Activated CD4-positive, alpha-beta T cell treated with anti-CD3 and anti-CD28 coated beads for 36 hours (primary cell): ENCODE measurements at regions of chr3 and their contacts with region 1.

Region 1: GRCh38 chr3:49411968-49412631 is at the starts of genes RHOA and TCTA:
- DNase-seq: peak; percentile 99
- ATAC-seq: peak; percentile 88
- H3K4me3 Mint-ChIP-seq: peak within 1 kb of the TSS; percentile 97
- H3K27ac Mint-ChIP-seq: peak within 1 kb of the TSS; percentile 97
- H3K4me1 Mint-ChIP-seq: peaks cover 63% of the 10 kb centered on the region
- H3K27me3 Mint-ChIP-seq: no peaks in the 10 kb centered on the region
- total RNA-seq, gene RHOA: 438 to 449 TPM
- total RNA-seq, gene TCTA: 9.4 TPM

Region 2: GRCh38 chr3:49007068-49007770 is 404.9 kb before region 1 on chr3 and contains the start of gene WDR6:
- CTCF ChIA-PET with region 1: no interaction called
- POLR2A ChIA-PET with region 1: interaction called, 4 read pairs
- intact Hi-C with region 1: loop called in 1 of 2 experiments (anchors 5 kb)
- DNase-seq: peak; percentile 99
- ATAC-seq: peak; percentile 90
- H3K4me3 Mint-ChIP-seq: peak within 1 kb of the TSS; percentile 100
- H3K27ac Mint-ChIP-seq: peak within 1 kb of the TSS; percentile 100
- H3K4me1 Mint-ChIP-seq: peaks cover 16% of the 10 kb centered on the region
- H3K27me3 Mint-ChIP-seq: no peaks in the 10 kb centered on the region
- total RNA-seq, gene WDR6: 109 to 127 TPM

Region 3: GRCh38 chr3:49104483-49105291 is 307.4 kb before region 1 on chr3 and contains the start of gene QARS1:
- CTCF ChIA-PET with region 1: no interaction called
- POLR2A ChIA-PET with region 1: no interaction called
- intact Hi-C with region 1: loop called in 1 of 2 experiments (anchors 1 kb)
- DNase-seq: peak; percentile 94
- ATAC-seq: peak; percentile 100
- H3K4me3 Mint-ChIP-seq: peak within 1 kb of the TSS; percentile 96
- H3K27ac Mint-ChIP-seq: peak within 1 kb of the TSS; percentile 96
- H3K4me1 Mint-ChIP-seq: peaks cover 21% of the 10 kb centered on the region
- H3K27me3 Mint-ChIP-seq: no peaks in the 10 kb centered on the region
- total RNA-seq, gene QARS1: 240 to 342 TPM

Region 4: GRCh38 chr3:49339945-49340800 is 71.9 kb before region 1 on chr3 and contains the start of gene USP4:
- CTCF ChIA-PET with region 1: interaction called, 12 read pairs
- POLR2A ChIA-PET with region 1: interaction called, 17 read pairs
- intact Hi-C with region 1: loop called (anchors 1 kb)
- DNase-seq: peak; percentile 97
- ATAC-seq: peak; percentile 89
- H3K4me3 Mint-ChIP-seq: peak within 1 kb of the TSS; percentile 99
- H3K27ac Mint-ChIP-seq: peak within 1 kb of the TSS; percentile 96
- H3K4me1 Mint-ChIP-seq: peaks cover 49% of the 10 kb centered on the region
- H3K27me3 Mint-ChIP-seq: no peaks in the 10 kb centered on the region
- total RNA-seq, gene USP4: 69.3 to 71.8 TPM

Region 5: DNA sequence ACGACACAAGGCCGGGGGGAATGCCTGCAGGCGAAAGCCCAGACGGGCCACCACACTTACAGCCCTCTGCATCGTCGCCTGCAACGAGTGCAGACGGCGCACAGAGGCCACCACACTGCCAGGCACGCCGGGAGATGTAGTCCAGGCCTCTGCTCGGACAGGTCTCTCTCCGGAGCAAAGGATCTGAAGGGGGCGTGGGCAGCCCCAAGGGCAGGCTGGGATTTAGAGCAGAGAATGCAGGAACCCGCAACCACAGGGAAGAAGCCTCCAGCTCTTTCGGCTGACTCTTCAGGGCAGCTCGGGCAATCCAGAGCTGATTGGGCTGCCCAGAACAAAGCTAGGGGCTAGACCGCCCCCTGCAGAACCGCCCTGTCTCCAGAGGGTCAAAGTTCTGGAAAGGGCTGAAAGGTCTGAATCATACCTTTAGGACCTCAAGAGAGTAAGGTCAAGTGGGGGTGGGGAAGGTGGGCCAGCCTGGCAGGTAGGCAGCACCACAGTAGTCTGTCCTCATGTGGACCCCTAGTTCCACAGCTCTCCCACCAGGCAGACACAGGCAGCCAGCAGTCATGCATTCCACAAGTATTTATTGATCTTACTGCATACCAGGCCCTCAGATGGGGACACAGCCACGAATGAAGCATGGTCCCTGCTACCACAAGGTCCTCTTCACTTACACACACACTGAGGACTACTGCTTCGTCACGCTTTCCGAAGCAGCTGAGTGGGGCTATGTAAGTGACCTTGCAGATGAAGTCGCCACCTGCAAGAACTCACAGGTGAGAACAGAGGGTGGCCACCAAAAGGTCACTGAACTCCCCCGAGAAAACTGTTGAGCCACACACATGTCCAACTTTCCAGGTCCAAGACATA is 10.5 kb after region 1 on chr3 and contains the start of gene AMT:
- CTCF ChIA-PET with region 1: interaction called, 11 read pairs
- POLR2A ChIA-PET with region 1: interaction called, 10 read pairs
- intact Hi-C with region 1: no loop called
- DNase-seq: no peak
- ATAC-seq: no peak
- H3K4me3 Mint-ChIP-seq: no peak within 1 kb of the TSS
- H3K27ac Mint-ChIP-seq: peak within 1 kb of the TSS; percentile 31
- H3K4me1 Mint-ChIP-seq: peaks cover 39% of the 10 kb centered on the region
- H3K27me3 Mint-ChIP-seq: no peaks in the 10 kb centered on the region
- total RNA-seq, gene AMT: 3.6 to 4.1 TPM

Region 6: DNA sequence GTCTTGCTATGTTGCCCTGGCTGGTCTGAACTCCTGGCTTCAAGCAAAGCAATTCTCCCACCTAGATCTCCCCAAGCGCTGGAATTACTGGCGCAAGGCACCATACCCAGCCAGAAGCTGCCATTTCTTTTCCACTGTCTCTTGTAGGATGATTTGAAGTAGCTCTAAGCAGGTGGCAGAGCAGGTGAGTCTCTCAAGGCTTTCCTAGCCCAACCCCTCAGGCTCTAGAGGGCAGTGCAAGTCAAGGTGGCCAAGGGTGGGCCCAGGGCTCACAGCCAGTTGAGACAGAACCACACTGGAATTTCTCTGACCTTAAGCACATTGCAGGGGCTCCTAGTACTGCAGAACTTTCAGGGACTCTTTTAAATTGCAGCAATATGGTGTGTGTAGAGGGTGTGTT is 42.4 kb after region 1 on chr3:
- CTCF ChIA-PET with region 1: interaction called, 37 read pairs
- POLR2A ChIA-PET with region 1: interaction called, 6 read pairs
- intact Hi-C with region 1: loop called (anchors 1 kb)
- DNase-seq: no peak
- ATAC-seq: no peak
- H3K4me3 Mint-ChIP-seq: no peak overlapping the region
- H3K27ac Mint-ChIP-seq: no peak overlapping the region
- H3K4me1 Mint-ChIP-seq: no peaks in the 10 kb centered on the region
- H3K27me3 Mint-ChIP-seq: no peaks in the 10 kb centered on the region

Region 7: GRCh38 chr3:49786241-49786958 is 374.3 kb after region 1 on chr3 and contains the start of gene IP6K1:
- CTCF ChIA-PET with region 1: no interaction called
- POLR2A ChIA-PET with region 1: no interaction called
- intact Hi-C with region 1: loop called in 1 of 2 experiments (anchors 2 kb)
- DNase-seq: peak; percentile 100
- ATAC-seq: peak; percentile 100
- H3K4me3 Mint-ChIP-seq: peak within 1 kb of the TSS; percentile 90
- H3K27ac Mint-ChIP-seq: peak within 1 kb of the TSS; percentile 96
- H3K4me1 Mint-ChIP-seq: peaks cover 37% of the 10 kb centered on the region
- H3K27me3 Mint-ChIP-seq: no peaks in the 10 kb centered on the region
- total RNA-seq, gene IP6K1: 29.1 to 31.0 TPM